ENCODE measurements at regions of chr3 and their contacts with region 1.

Region 1: GRCh38 chr3:157136647-157137387 is 23.1 kb downstream of the CCNL1 start:
- DNase-seq: no peak
- H3K4me3 Mint-ChIP-seq: no peak overlapping the region
- H3K27ac Mint-ChIP-seq: peak overlapping the region; percentile 89
- H3K4me1 Mint-ChIP-seq: peaks cover 61% of the 10 kb centered on the region
- H3K27me3 Mint-ChIP-seq: no peaks in the 10 kb centered on the region

Region 2: DNA sequence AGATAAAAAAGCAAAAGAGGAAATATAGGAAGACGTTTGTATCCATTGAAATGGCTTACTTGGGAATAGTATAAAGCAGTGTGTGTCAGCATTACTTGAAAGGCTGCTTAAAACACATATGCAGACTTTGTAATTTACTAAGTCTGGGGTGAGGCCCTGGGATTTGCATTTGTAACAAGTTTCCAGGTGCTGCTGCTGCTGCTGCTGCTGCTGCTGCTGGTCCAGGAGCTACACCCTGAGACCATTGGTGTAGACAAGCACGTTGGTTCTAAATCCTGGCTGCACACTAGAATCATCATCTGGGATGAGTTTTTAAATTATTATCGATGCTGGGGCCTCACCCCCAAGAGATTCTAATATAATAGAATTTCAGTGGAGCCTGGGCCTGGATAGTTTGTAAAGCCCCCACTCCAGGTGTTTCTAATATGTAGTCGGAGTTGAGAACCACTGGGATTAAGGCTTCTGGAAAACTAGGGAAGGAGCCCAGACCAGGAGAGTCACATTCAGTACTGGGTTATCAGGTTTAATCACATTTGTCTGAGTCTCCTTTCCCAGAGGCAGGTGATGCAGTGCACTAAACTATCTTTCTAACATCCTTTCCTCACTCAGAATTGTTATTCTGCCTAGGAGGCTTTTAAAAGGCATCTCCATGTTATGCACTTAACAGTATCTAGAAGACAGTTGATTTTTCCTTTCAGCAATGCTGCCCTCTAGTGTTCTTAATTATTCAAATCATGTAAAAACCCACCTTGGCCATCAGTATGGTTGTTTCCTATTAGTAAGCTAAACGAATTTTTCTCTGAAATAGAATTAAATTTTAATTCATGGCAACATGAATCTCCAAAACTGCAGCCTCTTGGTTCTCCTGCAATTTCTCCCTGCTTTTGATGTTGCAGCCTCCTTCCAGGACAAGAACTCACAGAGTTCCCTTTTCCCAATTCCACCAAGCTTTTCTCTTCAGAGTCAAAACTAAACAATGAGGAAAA is 627.3 kb before region 1 on chr3:
- CTCF ChIA-PET with region 1: interaction called, 11 read pairs
- POLR2A ChIA-PET with region 1: no interaction called
- DNase-seq: no peak
- H3K4me3 Mint-ChIP-seq: no peak overlapping the region
- H3K27ac Mint-ChIP-seq: no peak overlapping the region
- H3K4me1 Mint-ChIP-seq: peaks cover 18% of the 10 kb centered on the region
- H3K27me3 Mint-ChIP-seq: peaks cover 22% of the 10 kb centered on the region

Region 3: DNA sequence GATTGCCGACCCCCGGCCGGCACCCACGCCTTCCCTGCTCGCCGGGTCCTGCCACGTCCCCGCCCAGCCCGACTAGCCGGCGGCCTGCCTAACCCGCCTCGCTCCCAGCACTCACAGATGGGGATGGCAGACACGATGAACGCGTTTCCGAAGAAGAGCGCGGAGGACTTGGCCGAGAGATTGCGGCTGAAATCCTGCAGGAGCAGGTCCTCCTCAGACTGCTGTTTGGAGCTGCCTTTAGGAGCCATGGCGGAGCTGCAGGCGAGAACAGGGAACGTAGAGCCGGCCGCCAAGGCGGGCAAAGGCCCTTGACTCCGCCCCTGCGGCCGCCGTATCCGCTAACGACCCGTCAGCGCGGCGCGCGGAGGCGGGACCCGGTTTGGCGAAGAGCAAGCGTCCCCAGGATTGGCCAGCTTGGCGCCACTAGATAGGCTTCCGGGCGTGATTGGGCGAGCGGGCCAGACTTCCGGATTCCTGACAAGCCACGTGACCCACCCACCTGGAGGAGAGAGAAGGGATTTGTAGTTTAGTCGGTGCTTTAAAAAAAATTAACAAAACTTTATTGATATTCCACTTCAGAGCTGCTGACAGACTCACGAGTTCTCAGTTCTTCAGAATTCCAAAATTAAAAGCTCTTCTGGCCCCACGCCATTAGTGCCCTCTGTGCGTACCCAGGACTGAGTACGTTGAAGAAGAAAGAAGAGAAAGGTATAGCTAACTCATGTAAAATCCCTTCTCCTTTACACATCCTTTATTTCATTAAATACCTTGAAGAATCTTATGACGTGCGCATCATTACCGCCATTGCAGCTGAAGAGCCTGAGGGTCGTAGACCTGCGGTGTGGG is 581.8 kb before region 1 on chr3 and contains the start of gene SSR3:
- CTCF ChIA-PET with region 1: interaction called, 28 read pairs
- POLR2A ChIA-PET with region 1: interaction called, 16 read pairs
- DNase-seq: peak; percentile 99
- H3K4me3 Mint-ChIP-seq: peak within 1 kb of the TSS; percentile 96
- H3K27ac Mint-ChIP-seq: peak within 1 kb of the TSS; percentile 84
- H3K4me1 Mint-ChIP-seq: peaks cover 48% of the 10 kb centered on the region
- H3K27me3 Mint-ChIP-seq: no peaks in the 10 kb centered on the region
- total RNA-seq, gene SSR3: 167 to 174 TPM

Region 4: DNA sequence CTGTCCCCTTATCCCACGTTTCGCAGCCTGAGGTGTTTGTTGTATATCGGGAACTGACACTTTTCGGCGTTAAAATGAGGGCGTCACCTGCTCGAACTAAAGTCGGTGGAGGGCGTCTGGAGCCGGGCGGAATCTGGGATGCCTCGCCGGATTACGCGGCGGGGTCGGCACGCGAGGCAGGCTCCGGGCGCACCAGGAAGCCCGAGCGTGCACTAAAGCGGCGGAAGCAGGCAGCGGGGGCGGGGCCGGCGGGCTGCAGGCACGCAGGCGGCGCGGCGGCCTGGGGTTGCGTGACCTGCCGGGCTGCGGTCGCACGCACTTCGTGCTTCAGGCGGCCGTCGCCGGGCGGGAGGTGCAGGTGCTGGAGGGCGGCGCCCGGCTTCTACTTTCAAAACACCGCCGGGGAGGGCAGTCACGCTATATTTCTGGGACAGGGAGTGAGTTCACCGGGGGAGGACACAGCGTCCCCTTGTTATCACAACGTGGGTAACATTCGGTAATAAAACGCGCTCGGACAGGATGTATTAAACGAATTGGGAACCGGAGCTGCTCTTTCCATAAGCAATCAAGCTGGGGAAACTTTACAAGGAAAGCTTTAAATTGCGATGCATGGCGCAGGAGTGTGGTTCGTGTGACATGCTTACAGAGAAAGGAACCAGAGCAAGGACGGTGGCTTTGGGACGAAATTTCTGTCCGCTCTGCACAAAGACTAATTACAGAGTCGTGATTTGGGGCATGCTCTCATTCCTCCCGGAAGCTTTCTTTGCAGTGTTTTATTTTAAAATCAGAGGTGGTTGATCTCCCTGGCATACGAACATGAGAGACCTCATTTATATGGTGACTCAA is 319.8 kb before region 1 on chr3:
- CTCF ChIA-PET with region 1: interaction called, 6 read pairs
- POLR2A ChIA-PET with region 1: interaction called, 30 read pairs
- DNase-seq: peak; percentile 93
- H3K4me3 Mint-ChIP-seq: peak overlapping the region; percentile 86
- H3K27ac Mint-ChIP-seq: peak overlapping the region; percentile 96
- H3K4me1 Mint-ChIP-seq: peaks cover 71% of the 10 kb centered on the region
- H3K27me3 Mint-ChIP-seq: no peaks in the 10 kb centered on the region

Region 5: GRCh38 chr3:157081681-157082210 is 55.1 kb before region 1 on chr3:
- CTCF ChIA-PET with region 1: interaction called, 92 read pairs
- POLR2A ChIA-PET with region 1: interaction called, 381 read pairs
- DNase-seq: peak; percentile 85
- H3K4me3 Mint-ChIP-seq: no peak overlapping the region
- H3K27ac Mint-ChIP-seq: no peak overlapping the region
- H3K4me1 Mint-ChIP-seq: peaks cover 46% of the 10 kb centered on the region
- H3K27me3 Mint-ChIP-seq: no peaks in the 10 kb centered on the region

Region 6: GRCh38 chr3:157122116-157122515 is 14.7 kb before region 1 on chr3:
- CTCF ChIA-PET with region 1: interaction called, 34 read pairs
- POLR2A ChIA-PET with region 1: interaction called, 9 read pairs
- DNase-seq: no peak
- H3K4me3 Mint-ChIP-seq: no peak overlapping the region
- H3K27ac Mint-ChIP-seq: no peak overlapping the region
- H3K4me1 Mint-ChIP-seq: peaks cover 34% of the 10 kb centered on the region
- H3K27me3 Mint-ChIP-seq: no peaks in the 10 kb centered on the region

Region 7: GRCh38 chr3:157159762-157160657 is 23.2 kb after region 1 on chr3 and contains the start of gene CCNL1:
- CTCF ChIA-PET with region 1: interaction called, 35 read pairs
- POLR2A ChIA-PET with region 1: interaction called, 84 read pairs
- DNase-seq: peak; percentile 96
- H3K4me3 Mint-ChIP-seq: peak within 1 kb of the TSS; percentile 100
- H3K27ac Mint-ChIP-seq: peak within 1 kb of the TSS; percentile 100
- H3K4me1 Mint-ChIP-seq: peaks cover 57% of the 10 kb centered on the region
- H3K27me3 Mint-ChIP-seq: no peaks in the 10 kb centered on the region
- total RNA-seq, gene CCNL1: 223 to 249 TPM

Region 8: GRCh38 chr3:157219215-157219614 is 82.4 kb after region 1 on chr3:
- CTCF ChIA-PET with region 1: no interaction called
- POLR2A ChIA-PET with region 1: no interaction called
- DNase-seq: no peak
- H3K4me3 Mint-ChIP-seq: no peak overlapping the region
- H3K27ac Mint-ChIP-seq: no peak overlapping the region
- H3K4me1 Mint-ChIP-seq: no peaks in the 10 kb centered on the region
- H3K27me3 Mint-ChIP-seq: peaks cover 3% of the 10 kb centered on the region